ENCODE measurements at regions of chr15 and their contacts with region 1.

Region 1: DNA sequence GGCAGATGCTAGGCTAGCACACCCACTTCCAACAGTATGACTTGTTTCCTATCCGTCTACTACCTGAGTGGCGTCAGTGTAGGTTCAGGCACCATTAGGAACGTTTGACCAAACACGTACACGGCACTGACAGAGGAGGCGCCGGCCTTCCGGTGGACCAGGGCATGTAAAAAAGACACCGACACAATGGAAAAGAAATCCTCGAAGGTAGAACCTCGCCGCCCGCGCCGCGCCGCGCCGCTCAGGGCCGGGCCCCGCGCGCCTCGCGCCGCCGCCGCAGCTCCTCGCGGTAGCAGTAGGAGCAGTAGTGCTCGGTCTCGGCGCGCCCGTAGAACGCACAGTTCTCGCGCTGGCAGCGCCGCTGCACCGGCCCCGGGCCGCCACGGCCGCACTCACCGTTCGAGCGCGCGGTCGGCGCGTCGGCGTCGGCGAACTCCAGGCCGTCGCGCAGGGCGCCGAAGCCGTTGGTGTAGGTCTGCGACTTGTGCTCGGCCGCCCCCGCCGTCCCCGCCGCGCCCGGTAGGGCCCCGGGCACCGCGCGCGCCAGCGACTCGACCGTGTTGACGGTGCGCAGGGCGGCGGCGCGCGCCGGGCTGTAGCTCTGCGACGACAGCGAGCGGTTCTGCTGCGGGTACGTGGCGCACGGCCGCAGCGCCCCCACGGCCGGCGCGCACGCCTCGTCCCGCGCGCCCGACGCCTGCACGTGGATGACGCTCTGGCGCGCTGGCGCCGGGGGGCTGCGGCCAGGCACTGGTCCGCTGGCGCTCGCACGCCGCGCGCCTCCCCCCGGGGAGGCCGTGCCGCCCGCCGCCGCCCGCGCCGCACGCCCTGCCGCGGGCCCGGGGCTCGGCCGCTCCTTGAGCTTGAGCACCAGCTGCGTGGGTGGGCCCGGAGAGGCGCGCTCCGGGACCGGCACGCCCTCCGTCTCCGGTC is 156.7 kb downstream of the KLF13 start:
- DNase-seq: peak; percentile 33 to 76 (median 50)
- ATAC-seq: peak; percentile 72 to 79
- H3K4me3 Mint-ChIP-seq: peak overlapping the region; percentile 90 to 98 (median 97)
- H3K27ac Mint-ChIP-seq: peak overlapping the region; percentile 89 to 98 (median 96)
- H3K4me1 Mint-ChIP-seq: peaks cover 31 to 69% (median 60%) of the 10 kb centered on the region in 4 donors
- H3K27me3 Mint-ChIP-seq: peaks cover 0 to 6% (median 0%) of the 10 kb centered on the region in 5 donors

Region 2: GRCh38 chr15:31344823-31345605 is 138.3 kb before region 1 on chr15:
- POLR2A ChIA-PET with region 1: interaction called, 17 read pairs
- DNase-seq: peak in 2 of 10 donors; percentile 31 to 65
- ATAC-seq: peak in 1 of 2 donors; percentile 10
- H3K4me3 Mint-ChIP-seq: peak overlapping the region; percentile 81 to 98 (median 92)
- H3K27ac Mint-ChIP-seq: peak overlapping the region; percentile 96 to 100 (median 98)
- H3K4me1 Mint-ChIP-seq: peaks cover 61 to 100% (median 99%) of the 10 kb centered on the region in 4 donors
- H3K27me3 Mint-ChIP-seq: no peaks in the 10 kb centered on the region

Region 3: GRCh38 chr15:31352911-31353811 is 130.2 kb before region 1 on chr15:
- POLR2A ChIA-PET with region 1: interaction called, 16 read pairs
- DNase-seq: peak in 8 of 10 donors; percentile 44 to 82 (median 74)
- ATAC-seq: peak; percentile 48 to 70
- H3K4me3 Mint-ChIP-seq: peak overlapping the region; percentile 71 to 94 (median 86)
- H3K27ac Mint-ChIP-seq: peak overlapping the region; percentile 96 to 100 (median 98)
- H3K4me1 Mint-ChIP-seq: peaks cover 65 to 100% (median 100%) of the 10 kb centered on the region in 4 donors
- H3K27me3 Mint-ChIP-seq: no peaks in the 10 kb centered on the region

Region 4: GRCh38 chr15:31391687-31392671 is 91.3 kb before region 1 on chr15:
- POLR2A ChIA-PET with region 1: interaction called, 14 read pairs
- DNase-seq: peak; percentile 69 to 88 (median 81)
- ATAC-seq: peak; percentile 74 to 83
- H3K4me3 Mint-ChIP-seq: peak overlapping the region; percentile 86 to 97 (median 95)
- H3K27ac Mint-ChIP-seq: peak overlapping the region; percentile 79 to 98 (median 97)
- H3K4me1 Mint-ChIP-seq: peaks cover 35 to 67% (median 57%) of the 10 kb centered on the region in 4 donors
- H3K27me3 Mint-ChIP-seq: no peaks in the 10 kb centered on the region

Region 5: GRCh38 chr15:31472636-31473384 is 10.5 kb before region 1 on chr15:
- POLR2A ChIA-PET with region 1: interaction called, 67 read pairs
- DNase-seq: peak in 9 of 10 donors; percentile 27 to 75 (median 57)
- ATAC-seq: peak; percentile 84 to 87
- H3K4me3 Mint-ChIP-seq: peak overlapping the region; percentile 66 to 88 (median 81)
- H3K27ac Mint-ChIP-seq: peak overlapping the region; percentile 84 to 97 (median 95)
- H3K4me1 Mint-ChIP-seq: peaks cover 30 to 79% (median 63%) of the 10 kb centered on the region in 4 donors
- H3K27me3 Mint-ChIP-seq: no peaks in the 10 kb centered on the region

Region 6: GRCh38 chr15:31563421-31563820 is 80.1 kb after region 1 on chr15:
- POLR2A ChIA-PET with region 1: no interaction called
- DNase-seq: no peak
- ATAC-seq: no peak
- H3K4me3 Mint-ChIP-seq: no peak overlapping the region
- H3K27ac Mint-ChIP-seq: no peak overlapping the region
- H3K4me1 Mint-ChIP-seq: no peaks in the 10 kb centered on the region
- H3K27me3 Mint-ChIP-seq: peaks cover 0 to 2% (median 2%) of the 10 kb centered on the region in 5 donors

Measured in naive thymus-derived CD8-positive, alpha-beta T cell (primary cell).